Psoas muscle (tissue), 8 donors: ENCODE measurements at regions of chr2 and their contacts with region 1.

Region 1: GRCh38 chr2:177806025-177806424 is 266.6 kb downstream of the PDE11A start:
- DNase-seq: no peak
- ATAC-seq: no peak
- H3K4me3 ChIP-seq: no peak overlapping the region
- H3K27ac ChIP-seq: no peak overlapping the region
- H3K4me1 ChIP-seq: no peaks in the 10 kb centered on the region
- H3K27me3 ChIP-seq: no peaks in the 10 kb centered on the region
- CTCF ChIP-seq: no peak

Region 2: GRCh38 chr2:177830881-177831386 is 24.9 kb after region 1 on chr2:
- intact Hi-C with region 1: no loop called
- DNase-seq: no peak
- ATAC-seq: no peak
- H3K4me3 ChIP-seq: no peak overlapping the region
- H3K27ac ChIP-seq: no peak overlapping the region
- H3K4me1 ChIP-seq: no peaks in the 10 kb centered on the region
- H3K27me3 ChIP-seq: no peaks in the 10 kb centered on the region
- CTCF ChIP-seq: no peak

Region 3: DNA sequence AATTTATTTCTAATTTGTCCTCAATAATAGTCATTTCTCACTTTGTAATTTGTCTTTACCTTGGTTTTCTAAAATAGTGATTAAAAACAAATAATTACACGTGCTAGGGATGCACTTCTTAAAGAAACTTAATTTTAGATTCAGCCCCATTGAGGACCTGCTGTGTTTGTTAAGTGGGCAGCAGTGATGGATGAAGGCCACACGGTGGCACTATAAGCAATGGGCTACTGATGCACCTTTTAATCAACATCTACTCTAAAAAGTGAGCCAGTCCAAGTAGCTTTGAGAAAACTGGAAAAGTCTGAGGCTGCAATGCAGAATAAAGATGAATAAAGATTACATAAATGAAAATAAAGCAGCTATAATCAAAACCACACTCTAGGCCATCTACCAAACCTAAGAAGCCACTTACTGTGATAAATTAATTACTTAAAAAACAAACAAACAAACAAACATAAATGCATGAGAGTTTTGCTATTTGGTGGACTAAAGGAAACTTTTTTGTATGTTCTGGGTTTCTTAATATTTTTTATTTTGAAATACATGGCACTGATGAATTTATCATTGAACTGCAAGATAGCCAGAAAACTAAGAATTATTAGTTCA is 177.3 kb after region 1 on chr2:
- intact Hi-C with region 1: loop called in 1 of 2 experiments (anchors 10 kb)
- DNase-seq: peak in 1 of 2 donors; percentile 7
- ATAC-seq: peak in 3 of 4 donors; percentile 60 to 70 (median 64)
- H3K4me3 ChIP-seq: no peak overlapping the region
- H3K27ac ChIP-seq: no peak overlapping the region
- H3K4me1 ChIP-seq: no peaks in the 10 kb centered on the region
- H3K27me3 ChIP-seq: no peaks in the 10 kb centered on the region
- CTCF ChIP-seq: peak; percentile 71